ENCODE measurements at regions of chr17 and their contacts with region 1.

Region 1: DNA sequence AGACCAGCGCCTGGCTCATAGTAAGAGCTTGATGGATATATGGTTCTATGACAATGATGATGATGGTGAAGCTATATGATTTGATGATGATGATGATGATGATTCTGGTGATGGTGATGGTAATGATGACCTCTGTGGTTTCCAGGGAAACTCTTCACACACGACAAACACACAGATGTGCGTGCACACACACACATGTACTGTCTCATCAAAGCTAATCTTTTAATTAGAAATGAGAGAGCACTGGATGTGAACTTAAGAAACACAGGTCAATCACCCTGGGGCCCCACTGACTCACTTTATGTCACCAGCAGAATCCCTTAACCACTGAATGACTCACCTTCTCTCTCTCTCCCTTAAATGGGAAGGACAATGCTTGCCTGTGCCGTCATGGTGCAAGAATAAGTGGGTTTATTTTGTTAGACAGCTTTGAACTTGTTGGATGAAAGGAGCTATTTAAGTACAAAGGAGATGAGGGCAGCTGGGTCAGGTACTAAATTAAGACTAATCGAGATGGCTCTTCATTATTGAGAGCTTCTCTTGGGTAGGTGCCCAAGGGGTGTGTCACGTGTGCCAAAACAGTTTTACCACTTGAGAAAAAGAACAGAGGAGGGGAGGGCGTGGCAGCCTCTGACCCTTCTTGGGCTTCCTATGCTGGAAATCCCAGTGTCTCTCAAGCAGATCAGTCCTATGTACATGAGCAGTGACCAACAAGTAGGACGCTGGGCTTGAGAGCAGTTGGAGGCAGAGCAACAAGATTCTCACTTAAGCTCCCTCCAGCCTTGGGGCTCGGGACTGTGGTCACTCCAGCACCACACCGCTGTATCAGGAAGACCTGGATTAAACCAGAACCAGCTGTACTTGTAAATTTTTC is 6.6 kb upstream of the KRT31 start:
- DNase-seq: peak; percentile 80
- H3K4me3 ChIP-seq: no peak overlapping the region
- CTCF ChIP-seq: no peak

Region 2: DNA sequence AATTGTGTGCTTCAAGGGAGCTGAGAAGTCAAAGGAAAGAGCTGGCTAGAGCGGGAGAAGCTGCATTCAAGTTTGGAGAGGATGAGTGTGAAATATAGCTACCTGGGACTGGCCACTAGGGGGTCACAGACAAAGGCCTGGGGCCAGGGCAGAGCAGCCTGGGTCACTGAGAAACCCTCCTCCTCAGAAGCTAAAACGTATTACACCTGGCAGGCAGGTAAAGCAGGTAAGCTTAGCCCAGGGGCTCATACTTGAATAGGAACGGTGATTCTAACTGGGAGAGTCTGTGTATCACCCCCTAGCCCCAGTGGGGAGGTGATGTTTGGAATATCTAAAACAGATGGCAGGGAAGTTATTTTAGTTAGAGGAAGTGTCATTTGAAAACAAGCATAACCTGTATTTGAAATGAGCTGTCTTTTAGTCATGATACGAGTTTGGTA is 13.6 kb after region 1 on chr17:
- CTCF ChIA-PET with region 1: interaction called, 10 read pairs
- POLR2A ChIA-PET with region 1: interaction called, 4 read pairs
- DNase-seq: no peak
- H3K4me3 ChIP-seq: no peak overlapping the region
- CTCF ChIP-seq: peak; percentile 9